Mucosa of descending colon (tissue), 3 donors: ENCODE measurements at regions of chr10 and their contacts with region 1.

Region 1: GRCh38 chr10:96395931-96396877 is 37.4 kb upstream of the OPALIN start:
- DNase-seq: peak in 2 of 3 donors; percentile 68 to 80
- ATAC-seq: peak; percentile 90
- H3K4me3 ChIP-seq: no peak overlapping the region
- H3K4me1 ChIP-seq: no peaks in the 10 kb centered on the region
- CTCF ChIP-seq: peak; percentile 67

Region 2: GRCh38 chr10:96366502-96366901 is 29.7 kb before region 1 on chr10:
- intact Hi-C with region 1: no loop called
- DNase-seq: no peak
- ATAC-seq: no peak
- H3K4me3 ChIP-seq: no peak overlapping the region
- H3K4me1 ChIP-seq: no peaks in the 10 kb centered on the region
- CTCF ChIP-seq: no peak

Region 3: DNA sequence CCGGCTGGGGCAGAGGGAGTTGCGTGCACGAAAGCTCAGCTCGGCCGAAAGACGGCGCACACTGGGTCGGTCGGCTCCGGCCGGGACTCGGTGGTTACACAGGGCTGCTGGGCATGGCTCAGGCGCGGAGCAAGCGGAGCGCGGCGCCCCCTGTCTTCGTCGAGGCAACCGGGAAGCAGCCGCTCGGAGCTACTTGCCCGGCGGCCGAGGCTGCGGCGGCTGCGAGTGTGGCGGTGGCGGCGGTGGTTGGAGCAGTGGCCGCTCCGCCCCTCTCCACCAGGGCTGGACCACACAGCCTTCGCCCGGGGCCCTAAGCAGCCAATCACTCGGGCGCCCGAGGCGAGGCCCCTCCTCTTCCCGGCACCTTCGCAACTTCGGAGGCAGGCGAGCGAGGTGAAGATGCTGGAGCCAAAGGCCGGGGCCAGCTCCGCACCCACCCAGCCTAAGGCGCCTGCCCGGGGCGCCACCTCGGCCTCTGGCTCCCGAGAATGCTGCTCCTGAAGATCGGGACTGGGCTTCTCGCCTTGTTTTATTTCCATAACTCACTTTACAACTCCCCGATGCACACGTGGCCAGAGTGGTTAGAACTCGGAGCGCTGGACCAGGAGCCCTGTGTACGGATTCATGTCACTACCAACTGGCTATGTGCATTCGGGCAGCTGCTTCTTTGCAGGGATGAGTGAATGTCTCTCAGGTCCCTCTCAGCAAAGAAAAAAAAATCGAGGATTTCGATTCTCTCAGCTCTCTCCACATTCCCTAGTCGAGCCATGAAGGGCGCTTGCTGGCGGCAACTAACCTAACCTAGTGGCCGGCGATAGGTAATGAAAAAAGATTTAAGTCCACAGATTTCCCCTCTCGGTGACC is 117.7 kb after region 1 on chr10 and contains the start of gene TLL2:
- intact Hi-C with region 1: loop called (anchors 5 kb)
- DNase-seq: peak; percentile 83 to 91 (median 90)
- ATAC-seq: peak; percentile 95
- H3K4me3 ChIP-seq: no peak within 1 kb of the TSS
- H3K4me1 ChIP-seq: peaks cover 24% of the 10 kb centered on the region
- CTCF ChIP-seq: peak; percentile 69
- total RNA-seq, gene TLL2: 0.17 to 0.70 (median 0.65) TPM